Panc1 (cell line): ENCODE measurements at regions of chr4 and their contacts with region 1.

Region 1: GRCh38 chr4:31007858-31008257 is 287.7 kb downstream of the PCDH7 start:
- DNase-seq: no peak
- ATAC-seq: no peak
- H3K4me3 ChIP-seq: no peak overlapping the region
- H3K27ac ChIP-seq: no peak overlapping the region
- H3K4me1 ChIP-seq: no peaks in the 10 kb centered on the region
- H3K27me3 ChIP-seq: no peaks in the 10 kb centered on the region
- CTCF ChIP-seq: no peak

Region 2: DNA sequence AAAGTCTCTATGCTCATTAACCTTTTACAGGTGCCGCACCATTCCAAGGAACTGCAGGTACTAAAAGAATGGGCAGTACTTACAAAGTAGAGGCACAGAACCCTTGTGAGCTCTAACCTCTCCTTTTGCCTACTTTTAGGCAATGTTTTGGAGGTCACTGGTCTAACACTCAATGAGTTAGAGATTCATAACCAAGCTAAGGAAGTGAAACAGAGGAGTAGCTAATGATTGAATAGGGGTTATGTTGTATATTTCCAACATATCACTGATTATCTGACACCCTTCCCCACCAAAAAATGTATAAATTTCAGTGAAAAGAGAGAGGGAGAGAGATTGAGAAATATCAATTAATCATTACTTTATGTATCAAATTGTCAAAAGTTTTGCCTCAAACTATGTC is 18.4 kb before region 1 on chr4:
- CTCF ChIA-PET with region 1: no interaction called
- POLR2A ChIA-PET with region 1: interaction called, 12 read pairs
- in situ Hi-C with region 1: no loop called
- intact Hi-C with region 1: no loop called
- DNase-seq: no peak
- ATAC-seq: no peak
- H3K4me3 ChIP-seq: no peak overlapping the region
- H3K27ac ChIP-seq: no peak overlapping the region
- H3K4me1 ChIP-seq: no peaks in the 10 kb centered on the region
- H3K27me3 ChIP-seq: no peaks in the 10 kb centered on the region
- CTCF ChIP-seq: no peak

Region 3: GRCh38 chr4:32858971-32859370 is 1851.1 kb after region 1 on chr4:
- CTCF ChIA-PET with region 1: no interaction called
- POLR2A ChIA-PET with region 1: no interaction called
- in situ Hi-C with region 1: no loop called
- intact Hi-C with region 1: no loop called
- DNase-seq: no peak
- ATAC-seq: no peak
- H3K4me3 ChIP-seq: no peak overlapping the region
- H3K27ac ChIP-seq: no peak overlapping the region
- H3K4me1 ChIP-seq: no peaks in the 10 kb centered on the region
- H3K27me3 ChIP-seq: no peaks in the 10 kb centered on the region
- CTCF ChIP-seq: no peak